Vagina (tissue), 2 donors: ENCODE measurements at regions of chr11 and their contacts with region 1.

Region 1: GRCh38 chr11:130609121-130610035 is 160.9 kb downstream of the ADAMTS15 start:
- DNase-seq: peak in 1 of 2 donors; percentile 99
- H3K4me3 ChIP-seq: no peak overlapping the region
- H3K27ac ChIP-seq: peak overlapping the region; percentile 72
- H3K4me1 ChIP-seq: peaks cover 54% of the 10 kb centered on the region
- H3K27me3 ChIP-seq: no peaks in the 10 kb centered on the region
- CTCF ChIP-seq: no peak
- POLR2A ChIP-seq: no peak

Region 2: DNA sequence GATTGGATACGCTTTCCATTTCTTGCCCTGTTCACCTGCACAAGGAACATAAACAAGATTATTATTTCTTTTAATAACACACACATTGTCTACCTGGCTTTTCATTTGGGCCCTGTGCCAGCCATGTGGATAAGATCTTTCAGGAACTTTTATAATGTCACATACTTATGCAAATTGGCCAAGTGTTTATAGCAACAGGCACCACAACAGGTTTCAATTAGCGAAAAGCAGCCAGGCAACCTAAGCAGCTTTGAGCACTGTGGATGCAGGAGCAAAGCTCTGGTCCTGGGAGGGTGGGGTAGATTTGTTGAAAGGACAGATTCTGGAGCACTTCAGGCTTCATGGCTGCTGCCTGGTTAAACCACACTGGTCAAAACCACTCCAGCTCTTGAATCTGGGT is 1016.3 kb before region 1 on chr11:
- intact Hi-C with region 1: no loop called
- DNase-seq: no peak
- H3K4me3 ChIP-seq: no peak overlapping the region
- H3K27ac ChIP-seq: no peak overlapping the region
- H3K4me1 ChIP-seq: peaks cover 5% of the 10 kb centered on the region
- H3K27me3 ChIP-seq: no peaks in the 10 kb centered on the region
- CTCF ChIP-seq: no peak
- POLR2A ChIP-seq: no peak

Region 3: GRCh38 chr11:130448416-130449309 is 160.7 kb before region 1 on chr11 and contains the start of gene ADAMTS15:
- intact Hi-C with region 1: loop called (anchors 5 kb)
- DNase-seq: no peak
- H3K4me3 ChIP-seq: peak within 1 kb of the TSS; percentile 54 to 74
- H3K27ac ChIP-seq: peak within 1 kb of the TSS; percentile 68
- H3K4me1 ChIP-seq: peaks cover 36% of the 10 kb centered on the region
- H3K27me3 ChIP-seq: no peaks in the 10 kb centered on the region
- CTCF ChIP-seq: no peak
- POLR2A ChIP-seq: no peak
- total RNA-seq, gene ADAMTS15: 12.0 TPM

Region 4: GRCh38 chr11:130522284-130522961 is 87.0 kb before region 1 on chr11:
- intact Hi-C with region 1: loop called (anchors 2 kb)
- DNase-seq: peak in 1 of 2 donors; percentile 97
- H3K4me3 ChIP-seq: no peak overlapping the region
- H3K27ac ChIP-seq: peak overlapping the region; percentile 92
- H3K4me1 ChIP-seq: peaks cover 25% of the 10 kb centered on the region
- H3K27me3 ChIP-seq: no peaks in the 10 kb centered on the region
- CTCF ChIP-seq: no peak
- POLR2A ChIP-seq: no peak

Region 5: DNA sequence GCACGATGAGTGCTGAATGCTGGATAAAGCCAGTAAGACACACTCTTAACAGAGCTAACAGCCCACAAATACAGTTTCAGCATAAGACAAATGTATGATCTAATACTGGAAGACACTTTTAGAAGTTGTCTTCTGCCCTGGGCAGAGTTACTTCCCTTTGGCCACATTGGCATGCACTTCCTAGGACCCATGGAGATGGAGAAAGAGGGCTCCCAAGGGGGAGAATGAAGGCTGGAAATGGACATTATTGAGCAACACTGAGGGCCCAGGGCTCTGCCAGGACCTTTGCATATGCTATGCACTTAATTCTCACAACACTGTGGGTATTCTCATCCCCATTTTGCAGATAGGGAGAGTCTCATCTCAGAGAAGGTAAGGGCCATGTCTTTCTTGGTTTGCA is 37.9 kb before region 1 on chr11:
- intact Hi-C with region 1: no loop called
- DNase-seq: no peak
- H3K4me3 ChIP-seq: no peak overlapping the region
- H3K27ac ChIP-seq: no peak overlapping the region
- H3K4me1 ChIP-seq: no peaks in the 10 kb centered on the region
- H3K27me3 ChIP-seq: no peaks in the 10 kb centered on the region
- CTCF ChIP-seq: no peak
- POLR2A ChIP-seq: no peak